CD8-positive, alpha-beta T cell (primary cell): ENCODE measurements at regions of chr6 and their contacts with region 1.

Region 1: GRCh38 chr6:145214570-145214969 is 520.8 kb downstream of the EPM2A start:
- DNase-seq: peak in 2 of 9 experiments; percentile 17 to 38
- ATAC-seq: no peak
- H3K4me3 ChIP-seq: no peak overlapping the region
- H3K4me3 Mint-ChIP-seq: no peak overlapping the region
- H3K27ac ChIP-seq: no peak overlapping the region
- H3K27ac Mint-ChIP-seq: no peak overlapping the region
- H3K4me1 ChIP-seq: no peaks in the 10 kb centered on the region
- H3K4me1 Mint-ChIP-seq: peaks cover 3% of the 10 kb centered on the region
- H3K27me3 ChIP-seq: no peaks in the 10 kb centered on the region
- H3K27me3 Mint-ChIP-seq: peaks cover 9% of the 10 kb centered on the region
- CTCF ChIP-seq: peak; percentile 56

Region 2: DNA sequence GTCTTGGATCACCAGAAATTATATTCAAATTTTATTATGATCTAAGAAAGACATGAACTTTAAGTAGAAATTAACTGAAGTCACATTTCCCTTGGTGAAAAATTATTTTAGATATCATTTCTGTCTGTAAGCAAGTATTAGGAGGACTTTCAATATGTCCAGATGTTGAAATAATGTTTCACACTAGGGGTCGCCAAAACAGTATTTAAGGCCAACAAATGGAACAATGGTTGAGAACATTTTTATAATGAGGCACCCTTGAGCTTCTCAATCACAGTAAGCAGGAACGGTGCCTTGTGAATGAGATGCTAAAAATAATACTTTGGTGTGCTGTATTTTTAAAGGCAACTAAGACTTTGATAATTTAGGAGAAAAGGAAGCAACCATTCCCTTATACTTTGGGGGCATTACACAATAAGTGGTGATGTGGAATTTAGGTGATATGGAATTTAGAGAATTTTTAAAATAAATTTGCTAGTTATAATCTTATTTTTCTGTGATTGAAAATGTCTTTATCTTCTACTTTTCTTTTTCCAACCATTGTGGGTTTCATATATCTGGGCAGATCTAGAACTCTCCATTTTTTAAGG is 1109.6 kb before region 1 on chr6:
- CTCF ChIA-PET with region 1: no interaction called
- POLR2A ChIA-PET with region 1: no interaction called
- intact Hi-C with region 1: loop called in 1 of 2 experiments (anchors 10 kb)
- DNase-seq: peak in 5 of 9 experiments; percentile 16 to 83 (median 45)
- ATAC-seq: peak; percentile 78
- H3K4me3 ChIP-seq: no peak overlapping the region
- H3K4me3 Mint-ChIP-seq: no peak overlapping the region
- H3K27ac ChIP-seq: no peak overlapping the region
- H3K27ac Mint-ChIP-seq: no peak overlapping the region
- H3K4me1 ChIP-seq: no peaks in the 10 kb centered on the region
- H3K4me1 Mint-ChIP-seq: peaks cover 2% of the 10 kb centered on the region
- H3K27me3 ChIP-seq: no peaks in the 10 kb centered on the region
- H3K27me3 Mint-ChIP-seq: no peaks in the 10 kb centered on the region
- CTCF ChIP-seq: peak; percentile 79